ENCODE measurements at regions of chr19 and their contacts with region 1.

Region 1: GRCh38 chr19:3660493-3661219 is 34.1 kb upstream of the CACTIN start:
- DNase-seq: no peak
- ATAC-seq: no peak
- H3K4me3 ChIP-seq: no peak overlapping the region
- H3K27ac ChIP-seq: no peak overlapping the region
- H3K4me1 ChIP-seq: no peaks in the 10 kb centered on the region
- H3K27me3 ChIP-seq: no peaks in the 10 kb centered on the region
- CTCF ChIP-seq: no peak
- EP300 ChIP-seq: no peak
- POLR2A ChIP-seq: no peak
- RAD21 ChIP-seq: no peak

Region 2: DNA sequence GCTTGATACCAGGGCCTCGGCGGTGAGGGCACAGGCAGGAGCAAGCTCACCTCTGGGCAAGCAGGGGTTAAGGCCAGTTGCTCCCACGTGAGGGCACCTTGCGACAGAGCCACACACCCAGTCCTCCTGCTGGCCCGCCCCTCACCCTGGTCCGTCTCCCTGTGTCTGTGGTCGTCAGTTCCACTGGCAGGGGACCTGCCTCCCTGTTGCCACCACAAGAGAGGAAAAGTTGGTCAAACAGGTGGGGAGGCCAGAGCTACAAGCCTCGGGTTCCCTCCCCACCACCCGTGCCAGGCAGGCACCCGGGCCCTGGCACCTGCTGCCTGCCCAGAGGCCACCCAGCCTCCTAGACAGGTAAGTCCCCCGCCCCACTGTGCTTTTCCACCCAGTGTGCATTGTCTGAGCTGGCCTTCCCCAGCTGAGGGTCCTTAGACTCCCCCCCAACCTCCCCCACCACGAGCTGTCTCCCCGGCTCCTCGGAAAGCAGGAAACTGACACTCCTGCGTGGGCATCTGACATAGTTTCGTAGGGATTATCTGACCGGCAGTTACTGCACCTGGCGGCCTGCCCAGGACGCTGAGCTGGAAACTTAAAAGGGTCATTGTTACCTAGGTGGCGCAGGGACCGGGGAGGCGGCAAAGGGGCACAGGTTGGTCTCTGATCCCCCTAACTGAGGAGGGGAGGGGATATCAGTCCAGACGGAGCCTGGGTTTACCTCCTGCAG is 47.7 kb after region 1 on chr19 and contains the start of gene TJP3:
- CTCF ChIA-PET with region 1: interaction called, 16 read pairs
- POLR2A ChIA-PET with region 1: no interaction called
- in situ Hi-C with region 1: loop called (anchors 5 kb)
- intact Hi-C with region 1: loop called (anchors 5 kb)
- DNase-seq: peak; percentile 75
- ATAC-seq: peak; percentile 85
- H3K4me3 ChIP-seq: peak within 1 kb of the TSS; percentile 61 to 82 (median 77)
- H3K27ac ChIP-seq: peak within 1 kb of the TSS; percentile 85
- H3K4me1 ChIP-seq: peaks cover 60% of the 10 kb centered on the region
- H3K27me3 ChIP-seq: no peaks in the 10 kb centered on the region
- CTCF ChIP-seq: peak; percentile 63
- EP300 ChIP-seq: no peak; a peak in 1 of 4 replicates
- POLR2A ChIP-seq: peak; percentile 68 to 83
- RAD21 ChIP-seq: 0 out of 2 replicates have a peak, but pooled peaks have one; percentile 23
- total RNA-seq, gene TJP3: 20.6 and 21.5 TPM in 2 replicates

Measured in HepG2 (cell line).